Activated naive CD8-positive, alpha-beta T cell treated with anti-CD3 and anti-CD28 coated beads, Interleukin-2, amount 10 ng/mL, durations not matched to agents 7 days and 5 days (primary cell): ENCODE measurements at regions of chr17 and their contacts with region 1.

Region 1: DNA sequence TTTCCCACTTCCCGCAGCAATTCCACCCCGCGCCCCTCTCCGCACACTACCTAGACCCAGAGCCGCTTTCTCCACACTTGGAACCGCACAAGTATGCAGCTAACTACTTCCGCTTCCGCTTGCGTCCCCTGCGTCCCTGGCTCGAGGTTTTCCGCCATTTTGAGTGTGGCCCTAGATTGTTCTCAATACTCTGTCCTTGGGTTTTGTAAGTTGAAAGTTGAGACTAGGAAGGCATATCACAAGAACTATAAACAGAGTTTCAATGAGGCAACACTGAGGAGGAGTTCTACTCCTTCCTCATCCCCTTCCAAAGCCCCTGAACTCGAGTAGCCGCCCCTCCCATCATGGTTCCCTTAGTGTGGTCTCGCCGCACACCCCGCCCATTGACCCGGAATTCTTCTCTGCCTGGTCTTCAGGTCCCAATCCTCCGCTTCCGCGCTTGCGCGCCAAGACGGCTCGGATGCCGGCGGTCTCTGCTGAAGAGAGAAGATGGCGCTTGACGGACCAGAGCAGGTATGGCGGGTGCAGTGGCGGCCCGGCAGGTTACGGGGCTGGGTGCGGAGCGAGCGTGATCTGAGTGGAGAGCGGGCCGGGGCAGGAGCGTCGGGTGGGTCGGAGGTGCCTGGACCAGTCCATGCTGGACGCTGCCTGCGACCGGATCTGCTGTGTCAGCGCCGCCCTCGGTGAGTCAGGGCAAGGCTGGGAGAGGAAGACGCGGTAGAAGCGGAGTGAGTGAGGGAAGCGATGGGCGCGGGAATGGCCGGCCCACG is at the starts of genes FTSJ3 and PSMC5:
- DNase-seq: peak; percentile 93
- ATAC-seq: peak; percentile 92
- H3K4me3 Mint-ChIP-seq: peak within 1 kb of the TSS; percentile 91
- H3K27ac Mint-ChIP-seq: peak within 1 kb of the TSS; percentile 94
- H3K4me1 Mint-ChIP-seq: peaks cover 59% of the 10 kb centered on the region
- H3K27me3 Mint-ChIP-seq: no peaks in the 10 kb centered on the region
- total RNA-seq, gene FTSJ3: 56.7 to 58.6 TPM
- total RNA-seq, gene PSMC5: 132 to 135 TPM

Region 2: DNA sequence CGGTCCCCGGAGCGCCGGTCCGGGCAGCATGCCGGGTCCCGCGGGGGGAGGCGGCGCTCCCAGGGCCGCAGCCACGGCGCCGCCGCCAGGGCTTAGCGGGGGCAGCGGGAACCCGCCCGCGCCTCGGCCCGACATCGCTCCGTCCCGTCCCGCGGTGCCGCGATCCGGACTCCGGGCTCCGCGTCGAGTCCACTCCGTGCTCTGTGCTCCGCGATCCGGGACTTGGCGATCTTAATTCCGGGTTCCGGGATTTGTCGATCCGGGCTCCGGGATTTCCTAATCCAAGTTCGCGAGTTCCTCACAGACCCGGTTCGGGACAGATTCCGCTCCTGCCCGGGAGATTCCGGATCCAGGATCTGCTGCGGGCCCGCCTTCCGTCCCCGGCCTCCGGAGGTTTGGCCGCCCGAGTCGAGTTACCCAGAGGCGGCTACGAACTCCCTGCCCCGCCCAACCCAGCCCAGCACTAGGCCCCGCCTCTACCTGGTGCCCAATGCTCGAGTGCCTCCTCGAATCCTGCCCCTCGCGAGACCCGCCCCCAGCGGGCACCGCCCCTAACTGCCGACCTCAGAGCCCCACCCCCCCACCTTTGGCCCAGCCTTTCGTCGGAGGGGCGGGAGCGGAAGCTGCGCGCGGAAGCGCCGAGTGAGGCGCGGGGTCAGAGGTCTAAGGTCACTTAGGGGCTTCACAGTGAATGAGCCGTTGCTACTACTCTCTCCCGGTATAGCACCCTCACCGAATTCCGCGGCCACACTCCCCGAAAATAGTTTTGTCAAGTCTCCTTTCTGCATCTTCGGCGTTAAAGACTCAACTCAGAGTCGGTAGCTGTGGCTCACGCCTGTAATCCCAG is 15.6 kb after region 1 on chr17 and contains the start of gene SMARCD2:
- POLR2A ChIA-PET with region 1: interaction called, 83 read pairs
- DNase-seq: peak; percentile 99
- ATAC-seq: peak; percentile 83
- H3K4me3 Mint-ChIP-seq: peak within 1 kb of the TSS; percentile 93
- H3K27ac Mint-ChIP-seq: peak within 1 kb of the TSS; percentile 95
- H3K4me1 Mint-ChIP-seq: peaks cover 26% of the 10 kb centered on the region
- H3K27me3 Mint-ChIP-seq: peaks cover 2% of the 10 kb centered on the region
- total RNA-seq, gene SMARCD2: 129 to 138 TPM